Psoas muscle (tissue), 8 donors: ENCODE measurements at regions of chr13 and their contacts with region 1.

Region 1: DNA sequence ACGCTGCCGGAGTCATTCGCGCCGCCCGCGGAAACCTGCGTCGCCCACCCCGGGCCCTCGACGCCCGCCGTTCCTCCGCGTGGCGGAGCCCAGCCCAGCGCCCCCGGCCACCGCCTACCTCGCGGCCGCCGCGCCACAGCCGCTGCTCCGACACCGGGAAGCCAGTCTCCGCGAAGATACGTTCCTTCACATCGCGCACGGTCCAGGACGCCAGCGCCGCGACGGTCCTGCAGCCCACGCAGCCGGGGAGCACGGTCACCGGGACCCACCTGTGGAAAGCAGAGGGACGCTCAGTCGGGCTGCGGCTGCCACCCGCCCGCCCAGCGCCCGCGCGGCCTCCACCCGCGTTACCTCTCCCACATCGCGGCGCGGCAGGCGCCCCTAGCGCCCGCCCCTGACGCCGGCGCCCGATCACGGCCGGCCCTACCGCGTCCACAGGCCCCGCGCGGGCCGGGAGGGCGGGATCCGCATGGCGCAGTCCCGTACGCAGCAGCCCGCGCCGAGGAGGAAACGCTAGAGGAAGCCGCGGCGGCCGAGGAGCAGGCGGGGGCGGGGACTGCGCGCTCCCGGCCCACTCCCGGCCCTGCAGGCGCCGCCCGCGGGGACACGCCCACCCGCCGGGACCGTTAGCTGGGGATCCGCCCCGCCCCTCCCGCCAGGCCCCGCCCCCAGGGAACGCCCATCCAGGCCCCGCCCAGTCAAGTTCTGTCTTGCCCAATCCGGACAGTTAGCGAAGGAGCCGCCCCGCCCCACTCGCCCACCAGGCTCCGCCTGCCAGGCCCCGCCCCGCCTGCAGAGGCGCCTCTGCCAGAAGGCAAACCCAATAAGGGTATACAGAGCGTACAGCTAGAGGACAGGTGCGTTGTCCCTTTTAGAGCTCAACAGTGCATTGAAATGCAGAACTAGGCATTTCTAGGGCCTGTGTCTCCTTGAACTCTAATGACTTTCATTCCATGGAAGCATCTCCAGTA is 58.2 kb downstream of the SACS start:
- DNase-seq: peak; percentile 96 to 98
- ATAC-seq: peak; percentile 93 to 96 (median 94)
- H3K4me3 ChIP-seq: peak overlapping the region; percentile 86
- H3K27ac ChIP-seq: peak overlapping the region; percentile 91
- H3K4me1 ChIP-seq: peaks cover 40% of the 10 kb centered on the region
- H3K27me3 ChIP-seq: no peaks in the 10 kb centered on the region
- CTCF ChIP-seq: peak; percentile 39

Region 2: DNA sequence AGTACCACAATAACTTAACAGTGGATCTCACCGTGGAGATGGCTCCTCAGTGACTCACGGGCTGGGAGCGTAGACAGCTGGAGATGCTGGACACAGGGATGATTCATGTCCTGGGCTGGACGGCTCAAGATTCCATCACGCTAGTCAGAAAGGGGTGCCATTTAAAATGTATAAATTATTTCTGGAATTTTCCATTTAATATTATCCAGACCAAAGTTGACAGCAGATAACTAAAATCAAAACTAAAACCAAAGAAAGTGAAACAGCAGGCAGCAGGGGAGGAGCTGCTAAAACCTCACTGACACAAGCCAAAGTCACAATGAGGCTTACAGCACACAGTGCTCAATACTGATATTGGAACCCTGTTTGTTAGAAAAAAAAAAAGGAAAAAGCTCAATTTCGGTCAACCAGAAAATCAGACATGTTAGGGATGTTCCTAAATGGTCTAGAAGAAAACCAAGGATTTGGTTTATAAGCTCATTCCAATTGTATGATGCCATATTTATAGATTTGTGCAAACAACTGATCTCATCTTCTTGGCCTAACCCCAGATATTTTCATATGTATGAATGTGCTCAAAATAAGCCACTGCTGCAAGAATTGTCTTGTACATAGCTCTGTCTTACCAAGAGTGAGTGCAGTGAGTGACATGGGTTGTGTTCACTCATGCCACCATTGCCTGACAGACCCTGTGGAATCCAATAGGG is 53.6 kb before region 1 on chr13:
- intact Hi-C with region 1: loop called in 1 of 2 experiments (anchors 2 kb)
- DNase-seq: peak; percentile 77 to 83
- ATAC-seq: peak; percentile 91 to 96 (median 96)
- H3K4me3 ChIP-seq: peak overlapping the region; percentile 8
- H3K27ac ChIP-seq: peak overlapping the region; percentile 81
- H3K4me1 ChIP-seq: peaks cover 26% of the 10 kb centered on the region
- H3K27me3 ChIP-seq: no peaks in the 10 kb centered on the region
- CTCF ChIP-seq: no peak

Region 3: DNA sequence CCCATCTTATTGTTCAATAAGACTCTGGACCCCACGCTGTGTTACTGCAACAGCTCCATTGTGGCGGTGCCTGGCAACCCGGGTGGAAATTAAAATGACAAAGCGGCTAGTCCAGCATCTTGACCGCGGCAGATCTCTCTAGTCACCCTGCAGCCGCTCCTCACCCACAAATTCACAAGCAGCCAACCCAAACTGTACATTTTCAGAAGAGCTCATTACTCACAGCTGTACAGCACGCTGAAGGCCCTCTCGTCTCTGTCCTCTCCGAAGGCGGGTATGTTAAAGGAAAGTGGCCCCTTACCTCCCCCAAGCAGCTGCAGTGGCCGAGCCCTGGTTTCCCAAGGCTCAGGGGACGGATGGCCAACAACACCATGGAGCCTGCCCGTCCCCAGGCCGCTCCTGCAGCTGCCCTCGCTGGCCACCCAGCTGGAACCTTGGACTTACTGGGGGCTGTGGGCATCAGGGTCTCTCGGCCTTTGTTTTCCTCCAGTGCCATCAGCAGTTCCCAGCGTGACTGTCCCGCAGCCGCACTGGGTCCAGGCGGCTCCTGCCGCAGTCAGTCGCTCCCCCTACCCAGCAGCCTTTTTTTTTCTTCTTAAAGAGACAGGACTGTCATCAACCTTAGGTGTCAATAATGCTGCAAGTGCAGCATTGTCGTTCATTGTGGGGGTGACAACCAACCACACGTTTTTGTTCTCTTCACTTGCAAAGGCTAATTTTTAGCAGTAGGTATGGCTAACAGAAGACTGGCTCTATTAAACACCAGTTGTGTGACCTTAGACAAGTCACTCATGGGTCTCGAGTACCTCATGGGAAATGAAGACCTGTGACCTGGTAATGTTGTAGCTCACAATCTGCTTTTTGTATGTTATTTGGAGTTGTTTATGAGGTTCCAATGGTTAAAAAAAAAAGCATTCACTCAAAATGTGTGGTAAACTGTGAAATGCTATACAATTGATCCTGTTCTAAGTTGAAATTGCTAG is 58.2 kb after region 1 on chr13 and contains the start of gene SACS:
- intact Hi-C with region 1: loop called (anchors 5 kb)
- DNase-seq: peak in 1 of 2 donors; percentile 66
- ATAC-seq: peak; percentile 71 to 83 (median 78)
- H3K4me3 ChIP-seq: peak within 1 kb of the TSS; percentile 75
- H3K27ac ChIP-seq: peak within 1 kb of the TSS; percentile 82
- H3K4me1 ChIP-seq: peaks cover 48% of the 10 kb centered on the region
- H3K27me3 ChIP-seq: no peaks in the 10 kb centered on the region
- CTCF ChIP-seq: no peak
- total RNA-seq, gene SACS: 17.3 to 56.1 (median 43.5) TPM

Region 4: GRCh38 chr13:23558675-23559536 is 183.6 kb after region 1 on chr13:
- intact Hi-C with region 1: loop called in 1 of 2 experiments (anchors 5 kb)
- DNase-seq: peak; percentile 69 to 82
- ATAC-seq: peak; percentile 94 to 97 (median 96)
- H3K4me3 ChIP-seq: peak overlapping the region; percentile 47
- H3K27ac ChIP-seq: peak overlapping the region; percentile 89
- H3K4me1 ChIP-seq: peaks cover 7% of the 10 kb centered on the region
- H3K27me3 ChIP-seq: no peaks in the 10 kb centered on the region
- CTCF ChIP-seq: no peak

Region 5: DNA sequence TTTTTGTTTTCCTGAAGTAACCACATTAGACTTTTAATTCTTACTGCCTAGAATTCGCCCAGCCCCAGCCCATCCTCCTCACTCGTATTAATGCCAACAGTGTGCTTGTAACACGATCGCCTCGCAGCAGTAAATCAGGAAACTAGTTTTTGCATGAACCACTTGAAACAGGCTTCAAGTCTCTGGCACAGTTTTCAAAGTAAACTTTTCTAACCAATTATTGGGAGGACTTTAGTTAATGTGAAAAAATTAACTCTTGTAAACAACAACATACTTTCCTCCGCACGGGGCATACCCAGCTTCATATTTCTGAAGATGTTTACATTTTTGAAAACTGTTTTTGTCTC is 234.1 kb after region 1 on chr13:
- intact Hi-C with region 1: no loop called
- DNase-seq: no peak
- ATAC-seq: peak in 1 of 4 donors; percentile 64
- H3K4me3 ChIP-seq: peak overlapping the region; percentile 29
- H3K27ac ChIP-seq: no peak overlapping the region
- H3K4me1 ChIP-seq: peaks cover 8% of the 10 kb centered on the region
- H3K27me3 ChIP-seq: peaks cover 0 to 2% (median 0%) of the 10 kb centered on the region in 3 donors
- CTCF ChIP-seq: no peak

Region 6: DNA sequence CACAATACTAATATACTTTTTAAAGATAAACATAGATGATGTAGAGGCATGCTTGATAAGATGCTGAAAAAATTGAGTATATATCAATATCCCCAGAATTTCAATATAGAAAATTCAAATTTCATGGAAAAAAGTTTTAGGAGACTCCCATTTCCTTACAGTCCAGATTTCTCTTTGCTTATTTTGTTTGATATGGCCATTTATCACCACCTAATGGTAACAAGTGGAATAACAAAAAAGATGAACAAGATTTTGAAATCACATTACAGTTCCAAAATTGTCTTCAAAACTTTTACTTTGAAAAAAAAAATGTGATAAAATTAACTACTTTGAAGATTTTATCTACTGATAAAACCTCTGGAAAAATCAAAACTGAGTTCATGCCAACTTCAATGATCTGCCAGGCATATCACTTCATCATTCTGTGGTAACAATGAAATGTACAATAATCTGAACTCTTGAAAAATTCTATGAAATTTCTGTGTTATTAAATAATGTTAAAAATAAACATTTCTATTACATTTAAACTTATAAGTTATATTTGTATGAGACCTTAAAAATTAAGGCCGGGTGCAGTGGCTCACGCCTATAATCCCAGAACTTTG is 496.4 kb after region 1 on chr13:
- intact Hi-C with region 1: loop called in 1 of 2 experiments (anchors 10 kb)
- DNase-seq: no peak
- ATAC-seq: peak in 3 of 4 donors; percentile 50 to 79 (median 54)
- H3K4me3 ChIP-seq: no peak overlapping the region
- H3K27ac ChIP-seq: no peak overlapping the region
- H3K4me1 ChIP-seq: peaks cover 7% of the 10 kb centered on the region
- H3K27me3 ChIP-seq: no peaks in the 10 kb centered on the region
- CTCF ChIP-seq: peak; percentile 72